Endothelial cell of umbilical vein (primary cell): ENCODE measurements at regions of chr1 and their contacts with region 1.

Region 1: DNA sequence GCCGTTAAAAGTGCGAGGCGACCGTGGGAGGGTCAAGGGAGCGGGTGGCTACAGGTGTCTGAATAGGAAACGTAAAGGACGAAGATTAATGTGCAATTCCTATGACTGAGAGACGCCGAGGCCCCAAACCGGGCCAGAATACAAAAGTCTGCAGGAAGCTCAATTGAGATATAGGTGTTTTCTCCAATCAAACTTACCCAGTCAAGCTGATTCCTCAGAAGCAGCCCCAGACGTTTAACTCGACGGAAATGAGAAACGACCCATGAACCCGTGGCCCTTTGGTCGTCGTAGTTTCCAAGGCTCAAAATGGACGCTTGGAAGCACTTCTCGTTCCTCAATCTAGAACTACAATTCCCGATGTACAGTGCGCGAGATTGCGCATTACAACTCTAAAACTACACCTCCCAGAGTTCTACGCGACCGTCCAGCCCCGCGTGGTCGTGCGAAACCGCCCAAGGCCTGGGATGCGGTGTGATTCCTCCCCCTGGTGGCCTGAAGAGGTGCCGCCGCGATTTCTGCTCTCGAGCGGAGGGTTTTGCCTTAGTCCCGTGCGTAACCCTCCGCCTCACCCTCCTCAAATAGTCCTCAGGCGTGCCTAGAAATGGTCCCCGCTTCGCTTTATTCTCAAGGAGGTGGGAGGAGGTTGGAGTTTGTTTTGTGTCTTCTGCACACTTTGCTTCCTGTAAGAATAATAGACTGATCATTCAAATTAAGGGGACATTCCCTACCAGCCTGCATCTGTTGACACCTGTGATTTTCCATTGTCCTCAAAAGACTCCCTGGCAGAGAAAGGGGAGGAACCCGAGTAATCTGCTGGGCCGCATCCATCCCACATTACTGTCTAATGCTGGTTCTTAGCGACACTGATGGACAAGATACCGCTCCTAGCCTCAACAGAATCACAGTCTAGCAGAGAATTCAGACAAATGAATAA is at the start of gene PAFAH2:
- DNase-seq: peak; percentile 100
- H3K4me3 ChIP-seq: peak within 1 kb of the TSS; percentile 41 to 83 (median 68)
- H3K27ac ChIP-seq: peak within 1 kb of the TSS; percentile 57
- H3K4me1 ChIP-seq: peaks cover 16% of the 10 kb centered on the region
- H3K27me3 ChIP-seq: no peaks in the 10 kb centered on the region
- CTCF ChIP-seq: peak; percentile 96 to 99
- POLR2A ChIP-seq: peak; percentile 87
- total RNA-seq, gene PAFAH2: 5.0 and 6.9 TPM in 2 replicates

Region 2: DNA sequence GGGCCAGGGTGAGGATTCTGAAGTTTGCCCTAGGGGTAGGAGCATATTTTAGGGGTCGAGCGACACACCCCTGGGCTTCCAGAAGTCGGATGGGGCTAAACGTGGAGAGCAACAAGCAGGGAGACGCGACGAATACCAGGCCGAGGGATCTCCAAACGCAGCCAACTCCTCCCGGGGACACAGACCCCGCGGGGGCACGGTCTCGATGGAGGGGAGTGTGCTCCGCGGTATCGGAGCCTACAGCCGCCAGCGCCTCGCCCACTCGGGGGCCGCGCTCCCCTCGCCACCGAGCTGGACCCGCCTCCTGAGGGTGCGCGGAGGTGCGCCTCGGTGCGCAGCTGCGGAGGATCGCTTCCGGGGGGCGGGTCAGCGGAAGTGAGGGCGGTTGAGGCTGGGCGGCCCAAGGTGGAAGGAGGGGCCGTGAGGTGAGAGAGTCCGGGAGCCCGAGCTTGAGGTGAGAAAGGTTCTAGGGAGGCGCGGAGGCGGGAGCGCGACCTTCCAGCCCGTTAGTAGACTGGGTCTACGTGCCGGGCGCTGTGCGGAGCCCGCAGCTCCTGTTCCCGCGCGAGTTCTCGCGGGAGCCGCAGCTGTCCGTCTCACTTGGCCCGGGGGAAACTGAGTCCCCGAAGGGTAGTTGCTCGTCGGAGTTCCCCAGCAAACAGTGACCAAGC is 178.4 kb before region 1 on chr1 and contains the start of gene MTFR1L:
- CTCF ChIA-PET with region 1: interaction called, 8 read pairs
- POLR2A ChIA-PET with region 1: no interaction called
- dilution Hi-C with region 1: no loop called
- intact Hi-C with region 1: loop called (anchors 1 kb)
- DNase-seq: peak; percentile 77
- H3K4me3 ChIP-seq: peak within 1 kb of the TSS; percentile 74 to 80 (median 77)
- H3K27ac ChIP-seq: peak within 1 kb of the TSS; percentile 47
- H3K4me1 ChIP-seq: peaks cover 14% of the 10 kb centered on the region
- H3K27me3 ChIP-seq: no peaks in the 10 kb centered on the region
- CTCF ChIP-seq: no peak
- POLR2A ChIP-seq: peak; percentile 65
- total RNA-seq, gene MTFR1L: 33.8 and 34.8 TPM in 2 replicates

Region 3: DNA sequence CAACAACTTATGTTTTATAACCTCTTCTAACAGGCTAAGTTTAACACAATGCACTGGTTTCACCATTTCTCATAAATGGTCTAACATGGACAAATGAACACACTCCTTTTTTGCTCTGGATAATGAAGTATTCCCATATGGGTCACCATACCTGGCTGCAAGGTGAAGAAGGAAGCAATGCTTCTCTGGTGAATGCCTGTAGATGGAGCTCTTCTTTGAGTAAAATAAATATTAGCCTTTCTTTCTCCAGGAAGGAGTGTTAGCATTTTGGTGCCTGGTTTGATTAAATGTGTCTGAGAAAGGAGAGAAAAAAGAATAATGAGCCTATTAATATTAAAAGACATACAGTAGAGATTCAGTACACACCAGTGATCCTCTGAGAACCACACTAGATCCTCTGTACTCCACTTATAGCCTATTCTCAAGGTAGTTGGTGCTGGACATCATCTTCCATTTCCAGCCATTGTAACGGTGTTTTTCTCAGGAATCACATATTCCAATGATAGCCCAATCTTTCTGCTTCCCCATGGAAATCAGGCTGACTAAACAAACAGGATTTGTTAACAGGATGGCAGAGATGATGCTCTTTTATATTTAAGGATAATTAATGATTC is 160.7 kb before region 1 on chr1:
- CTCF ChIA-PET with region 1: interaction called, 6 read pairs
- POLR2A ChIA-PET with region 1: interaction called, 5 read pairs
- dilution Hi-C with region 1: no loop called
- intact Hi-C with region 1: loop called (anchors 1 kb)
- DNase-seq: no peak
- H3K4me3 ChIP-seq: no peak overlapping the region
- H3K27ac ChIP-seq: no peak overlapping the region
- H3K4me1 ChIP-seq: no peaks in the 10 kb centered on the region
- H3K27me3 ChIP-seq: no peaks in the 10 kb centered on the region
- CTCF ChIP-seq: no peak
- POLR2A ChIP-seq: no peak